PC-3 (cell line): ENCODE measurements at regions of chr2 and their contacts with region 1.

Region 1: DNA sequence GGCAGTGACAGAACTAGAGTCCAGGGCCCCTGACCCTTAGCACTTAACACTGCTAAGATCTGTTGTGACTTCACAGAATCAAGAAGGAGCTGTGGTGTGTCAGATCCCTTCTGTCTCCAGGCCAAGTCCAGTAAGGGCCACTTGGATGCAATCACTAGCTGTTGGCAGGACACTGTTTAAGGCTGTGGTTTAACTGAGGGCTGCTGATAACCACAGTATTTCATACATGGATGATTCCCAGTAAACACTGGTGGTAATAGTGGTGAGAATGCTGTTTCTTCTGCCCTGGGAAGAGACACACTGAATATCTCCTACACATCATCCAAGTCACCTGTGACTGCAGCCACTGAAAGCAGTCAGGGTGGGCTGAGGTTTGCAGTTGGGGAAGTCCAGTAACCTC is 77.7 kb upstream of the FBXO11 start:
- DNase-seq: peak; percentile 12
- ATAC-seq: no peak; the same call in 1 of the 2 replicates
- H3K4me3 ChIP-seq: no peak overlapping the region
- H3K27ac ChIP-seq: no peak overlapping the region
- H3K4me1 ChIP-seq: no peaks in the 10 kb centered on the region
- H3K27me3 ChIP-seq: peaks cover 37% of the 10 kb centered on the region
- CTCF ChIP-seq: no peak

Region 2: DNA sequence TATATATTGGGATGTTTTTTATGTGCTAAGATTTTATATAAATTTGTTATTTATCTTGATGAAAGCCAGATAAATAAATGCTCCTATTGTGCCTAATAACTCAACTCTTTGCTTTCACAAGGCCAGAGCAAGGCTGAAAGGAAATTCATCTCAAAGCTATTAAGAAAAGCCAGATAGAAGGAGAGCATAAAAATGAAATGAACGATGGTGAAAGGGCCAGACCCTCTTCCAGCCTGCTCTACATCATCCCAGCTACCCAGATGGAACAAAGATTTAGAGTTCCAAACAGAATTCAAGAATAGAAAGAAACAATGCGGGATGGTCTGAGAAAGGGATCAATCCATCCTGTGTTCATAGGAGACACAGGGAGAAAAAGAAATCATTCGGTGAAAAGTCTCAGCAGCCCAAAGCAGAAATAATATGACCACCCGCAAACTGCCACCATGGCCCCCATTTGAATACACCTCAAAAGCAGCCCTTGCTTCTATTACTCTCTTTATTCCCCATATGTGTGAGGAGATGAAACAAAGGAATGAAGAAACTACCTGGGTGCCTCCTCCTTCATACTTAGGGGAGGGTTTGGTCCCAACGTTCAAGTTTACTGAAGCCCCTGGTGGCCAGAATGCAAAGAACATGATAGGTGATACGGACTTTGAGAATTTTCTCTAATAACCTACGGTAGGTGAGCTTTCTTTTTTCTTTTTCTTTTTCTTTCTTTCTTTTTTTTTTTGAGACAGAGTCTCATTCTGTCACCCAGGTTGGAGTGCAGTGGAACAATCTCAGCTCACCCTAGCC is 32.4 kb after region 1 on chr2:
- CTCF ChIA-PET with region 1: no interaction called
- POLR2A ChIA-PET with region 1: interaction called, 21 read pairs
- intact Hi-C with region 1: no loop called
- DNase-seq: peak; percentile 44
- ATAC-seq: no peak; the same call in 1 of the 2 replicates
- H3K4me3 ChIP-seq: no peak overlapping the region
- H3K27ac ChIP-seq: no peak overlapping the region
- H3K4me1 ChIP-seq: no peaks in the 10 kb centered on the region
- H3K27me3 ChIP-seq: peaks cover 27% of the 10 kb centered on the region
- CTCF ChIP-seq: peak; percentile 50

Region 3: DNA sequence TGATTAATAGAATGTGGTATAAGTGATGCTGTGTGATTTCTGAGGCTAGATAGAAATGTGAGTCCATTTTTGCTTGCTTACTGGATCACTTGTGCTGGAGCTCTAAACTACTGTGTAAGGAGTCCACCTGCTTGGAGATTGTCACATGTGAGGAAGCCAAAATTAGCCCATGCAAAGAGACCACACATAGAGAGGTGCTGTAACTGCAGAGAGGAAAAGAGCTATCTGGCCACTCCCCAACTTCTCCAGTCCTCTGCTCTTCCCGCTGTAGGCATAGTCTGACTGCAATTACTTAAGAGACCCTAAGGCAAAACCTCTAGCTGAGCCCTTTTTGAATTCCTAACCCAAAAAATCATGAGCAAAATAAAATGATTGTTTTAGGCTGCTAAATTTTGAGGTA is 42.8 kb after region 1 on chr2:
- CTCF ChIA-PET with region 1: no interaction called
- POLR2A ChIA-PET with region 1: no interaction called
- intact Hi-C with region 1: no loop called
- DNase-seq: no peak
- ATAC-seq: no peak
- H3K4me3 ChIP-seq: no peak overlapping the region
- H3K27ac ChIP-seq: no peak overlapping the region
- H3K4me1 ChIP-seq: no peaks in the 10 kb centered on the region
- H3K27me3 ChIP-seq: peaks cover 91% of the 10 kb centered on the region
- CTCF ChIP-seq: no peak